ENCODE measurements at regions of chr9 and their contacts with region 1.

Region 1: GRCh38 chr9:37943329-37944265 is 39.7 kb upstream of the SLC25A51 start:
- DNase-seq: peak in 1 of 2 donors; percentile 85
- H3K4me3 ChIP-seq: no peak overlapping the region
- H3K27ac ChIP-seq: peak overlapping the region; percentile 65 to 79
- H3K4me1 ChIP-seq: peaks cover 25 to 42% of the 10 kb centered on the region in 2 donors
- H3K27me3 ChIP-seq: no peaks in the 10 kb centered on the region
- CTCF ChIP-seq: no peak

Region 2: GRCh38 chr9:37740636-37741328 is 202.8 kb before region 1 on chr9:
- intact Hi-C with region 1: no loop called
- DNase-seq: peak in 1 of 2 donors; percentile 31
- H3K4me3 ChIP-seq: no peak overlapping the region
- H3K27ac ChIP-seq: no peak overlapping the region
- H3K4me1 ChIP-seq: no peaks in the 10 kb centered on the region
- H3K27me3 ChIP-seq: no peaks in the 10 kb centered on the region
- CTCF ChIP-seq: no peak

Region 3: DNA sequence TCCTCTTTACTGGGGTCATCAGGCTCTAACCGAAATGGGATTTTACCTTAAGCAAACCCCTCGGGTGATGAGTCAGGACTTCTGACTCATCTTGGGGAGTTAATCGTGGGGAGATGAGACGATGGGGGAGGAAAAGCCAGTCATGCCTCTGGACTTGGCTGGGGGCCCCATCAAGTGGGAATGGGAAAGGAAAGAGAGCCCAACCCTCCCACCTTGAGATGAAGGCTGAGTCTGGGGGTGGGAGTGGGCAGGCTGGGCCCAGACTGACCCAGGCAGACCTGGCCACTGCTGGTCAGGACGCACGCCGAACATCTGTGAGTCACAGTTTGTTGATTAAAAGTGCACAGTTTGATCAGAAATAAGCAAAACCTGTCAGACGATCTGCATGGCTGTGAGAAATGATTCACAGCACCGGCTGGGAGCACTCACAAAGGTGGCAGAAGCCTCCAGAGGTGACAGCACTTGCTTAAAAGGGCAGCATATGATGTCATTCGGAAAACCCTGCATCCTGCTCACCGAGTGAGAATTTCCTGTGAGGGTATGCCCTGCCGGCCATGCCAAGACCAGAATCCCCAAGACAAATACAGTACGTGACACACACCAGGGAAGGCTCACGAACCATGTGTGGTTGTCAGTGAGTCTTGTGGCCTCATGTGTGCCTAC is 10.3 kb after region 1 on chr9:
- intact Hi-C with region 1: loop called (anchors 1 kb)
- DNase-seq: peak; percentile 66 to 84
- H3K4me3 ChIP-seq: no peak overlapping the region
- H3K27ac ChIP-seq: peak overlapping the region; percentile 65 to 68
- H3K4me1 ChIP-seq: peaks cover 7 to 14% of the 10 kb centered on the region in 2 donors
- H3K27me3 ChIP-seq: no peaks in the 10 kb centered on the region
- CTCF ChIP-seq: no peak